ENCODE measurements at regions of chr1 and their contacts with region 1.

Region 1: DNA sequence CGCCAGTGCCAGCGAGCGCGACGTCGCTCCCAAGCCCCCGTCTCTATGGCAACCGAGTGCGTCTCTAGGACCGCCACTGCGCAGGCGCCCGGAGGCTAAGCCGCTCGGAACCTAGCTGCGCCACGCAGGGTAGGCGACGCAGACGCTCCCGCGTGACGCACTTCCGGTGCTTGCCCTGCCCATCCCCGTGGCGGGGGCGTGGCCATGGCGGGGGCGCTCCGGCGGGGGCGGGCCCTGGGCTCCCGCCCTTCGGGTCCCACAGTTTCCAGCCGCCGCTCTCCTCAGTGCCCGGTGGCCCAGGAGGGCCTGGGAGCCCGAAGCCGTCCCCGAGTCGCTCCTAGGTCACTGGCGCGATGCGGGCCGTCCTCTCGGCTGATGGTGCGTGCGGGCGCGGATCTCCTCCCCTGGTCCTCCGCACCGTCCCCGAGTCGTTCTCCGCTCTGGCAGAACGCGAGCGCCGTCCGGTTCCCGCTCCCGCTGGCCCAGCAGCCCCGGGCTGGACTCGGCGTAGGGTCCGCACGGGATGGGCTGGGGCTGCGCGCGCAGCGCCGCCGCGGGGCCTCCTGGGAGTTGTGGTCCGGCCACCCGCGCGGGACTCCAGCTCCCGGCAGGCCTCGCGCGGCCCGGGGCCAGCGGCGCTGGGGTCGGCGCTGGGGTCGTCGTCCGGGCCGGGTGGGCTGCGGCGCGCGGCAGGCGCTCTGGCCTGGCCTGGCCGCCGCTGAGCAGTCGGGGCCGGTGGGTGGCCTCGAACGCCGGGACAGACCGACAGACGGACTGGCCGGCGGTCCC is at the start of gene MIB2:
- DNase-seq: peak; percentile 95
- H3K4me3 ChIP-seq: peak within 1 kb of the TSS; percentile 100
- H3K27ac ChIP-seq: peak within 1 kb of the TSS; percentile 100
- H3K4me1 ChIP-seq: peaks cover 26% of the 10 kb centered on the region
- H3K27me3 ChIP-seq: no peaks in the 10 kb centered on the region
- CTCF ChIP-seq: peak in 2 of 4 experiments; percentile 4
- POLR2A ChIP-seq: peak; percentile 52
- total RNA-seq, gene MIB2: 60.6 to 152 TPM

Region 2: DNA sequence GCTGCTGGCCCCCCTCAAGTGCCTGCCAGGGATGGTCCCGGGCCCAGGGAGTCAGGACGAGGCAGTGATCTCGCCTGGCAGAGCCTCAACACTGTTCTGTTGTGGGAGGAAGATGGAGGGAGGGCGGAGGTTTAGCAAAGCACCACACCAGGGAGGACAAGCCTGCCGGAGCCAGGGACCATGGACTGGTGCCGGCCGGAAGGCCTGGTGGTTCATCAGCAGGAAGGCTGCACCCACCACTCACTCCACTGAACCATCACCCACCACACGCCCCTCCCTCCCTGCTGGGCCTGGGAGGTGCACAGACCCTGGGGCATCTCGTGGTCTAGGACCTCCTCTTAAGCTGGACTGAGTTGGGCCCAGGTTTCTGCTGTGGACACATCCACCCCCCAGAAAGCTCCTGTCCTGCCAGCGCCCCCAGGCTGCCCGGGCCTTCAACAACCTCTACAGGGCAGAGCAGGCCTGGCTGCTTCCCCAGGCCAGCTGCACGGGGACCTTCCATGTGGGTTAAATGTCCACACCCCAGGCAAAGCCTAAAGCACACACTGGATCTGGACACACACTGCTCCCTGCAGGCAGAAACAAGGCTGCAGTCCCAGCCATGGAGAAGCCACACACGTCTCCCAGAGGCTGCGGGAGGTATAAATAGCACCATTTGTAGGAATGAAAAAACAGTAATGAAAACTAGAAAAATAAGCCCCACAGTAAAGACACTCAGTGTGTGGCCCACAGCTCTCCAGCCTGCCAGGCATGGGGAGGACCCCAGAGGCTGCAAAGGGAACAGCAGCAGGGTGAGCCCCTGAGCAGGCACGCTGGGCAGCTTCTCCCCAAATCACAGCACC is 64.6 kb before region 1 on chr1:
- intact Hi-C with region 1: no loop called
- DNase-seq: no peak
- H3K4me3 ChIP-seq: no peak overlapping the region
- H3K27ac ChIP-seq: no peak overlapping the region
- H3K4me1 ChIP-seq: no peaks in the 10 kb centered on the region
- H3K27me3 ChIP-seq: no peaks in the 10 kb centered on the region
- CTCF ChIP-seq: no peak
- POLR2A ChIP-seq: no peak

Region 3: GRCh38 chr1:1574721-1575537 is 40.5 kb before region 1 on chr1 and contains the start of gene SSU72:
- intact Hi-C with region 1: loop called (anchors 2 kb)
- DNase-seq: peak; percentile 89
- H3K4me3 ChIP-seq: peak within 1 kb of the TSS; percentile 99 to 100
- H3K27ac ChIP-seq: peak within 1 kb of the TSS; percentile 97 to 98
- H3K4me1 ChIP-seq: peaks cover 5% of the 10 kb centered on the region
- H3K27me3 ChIP-seq: no peaks in the 10 kb centered on the region
- CTCF ChIP-seq: peak in 1 of 4 experiments; percentile 22
- POLR2A ChIP-seq: peak; percentile 60
- total RNA-seq, gene SSU72: 173 to 203 TPM

Region 4: DNA sequence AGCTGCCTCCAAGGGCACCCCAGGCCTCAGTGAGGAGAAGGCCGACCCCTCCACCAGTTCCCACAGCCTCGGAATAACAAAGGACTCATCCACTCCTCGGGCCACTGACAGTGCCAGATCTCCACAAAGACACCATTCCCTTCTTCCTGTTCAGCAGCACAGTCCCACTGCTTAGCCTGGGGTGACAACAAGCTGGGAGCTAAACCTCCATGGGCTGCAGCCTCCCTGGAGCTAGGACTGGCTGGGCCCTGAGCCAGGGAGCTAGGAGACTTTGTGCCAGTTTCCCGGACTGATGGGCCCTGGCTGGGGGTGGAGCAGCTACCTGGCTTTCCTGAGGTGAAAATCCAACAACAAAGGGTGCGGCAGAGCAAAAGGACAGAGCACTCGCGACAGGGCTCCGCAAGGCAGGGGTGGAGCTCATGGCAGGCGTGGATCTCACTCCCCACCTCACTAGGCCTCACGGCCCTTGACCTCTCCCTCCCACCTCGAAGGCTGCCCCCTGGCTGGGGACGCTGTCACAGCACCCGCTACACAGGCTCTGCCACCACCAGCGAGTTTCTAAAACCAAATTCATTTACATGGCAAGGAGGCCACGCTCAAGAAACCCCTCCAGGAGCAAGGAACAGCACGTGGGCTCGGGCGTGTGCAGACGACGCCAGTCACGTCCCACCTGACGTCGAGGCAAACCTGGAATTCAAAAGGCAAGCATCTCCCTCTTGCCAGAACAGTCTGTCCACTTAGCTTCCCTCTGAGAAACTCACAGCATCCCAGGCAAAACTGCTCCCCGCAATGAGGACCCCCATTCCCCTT is 63.3 kb after region 1 on chr1:
- intact Hi-C with region 1: loop called (anchors 10 kb)
- DNase-seq: no peak
- H3K4me3 ChIP-seq: no peak overlapping the region
- H3K27ac ChIP-seq: no peak overlapping the region
- H3K4me1 ChIP-seq: no peaks in the 10 kb centered on the region
- H3K27me3 ChIP-seq: no peaks in the 10 kb centered on the region
- CTCF ChIP-seq: peak in 1 of 4 experiments; percentile 40
- POLR2A ChIP-seq: no peak